ENCODE measurements at regions of chr6 and their contacts with region 1.

Region 1: GRCh38 chr6:34887753-34888513 is at the start of gene TAF11:
- DNase-seq: peak; percentile 93
- H3K4me3 ChIP-seq: peak within 1 kb of the TSS; percentile 80 to 96 (median 87)
- H3K27ac ChIP-seq: peak within 1 kb of the TSS; percentile 82
- H3K4me1 ChIP-seq: peaks cover 14% of the 10 kb centered on the region
- H3K27me3 ChIP-seq: no peaks in the 10 kb centered on the region
- CTCF ChIP-seq: no peak
- POLR2A ChIP-seq: peak; percentile 83
- total RNA-seq, gene TAF11: 37.1 and 41.0 TPM in 2 replicates

Region 2: GRCh38 chr6:34867484-34867883 is 20.4 kb before region 1 on chr6:
- CTCF ChIA-PET with region 1: interaction called, 7 read pairs
- POLR2A ChIA-PET with region 1: no interaction called
- dilution Hi-C with region 1: no loop called
- intact Hi-C with region 1: loop called (anchors 1 kb)
- DNase-seq: no peak
- H3K4me3 ChIP-seq: no peak overlapping the region
- H3K27ac ChIP-seq: no peak overlapping the region
- H3K4me1 ChIP-seq: peaks cover 22% of the 10 kb centered on the region
- H3K27me3 ChIP-seq: no peaks in the 10 kb centered on the region
- CTCF ChIP-seq: no peak
- POLR2A ChIP-seq: no peak

Region 3: DNA sequence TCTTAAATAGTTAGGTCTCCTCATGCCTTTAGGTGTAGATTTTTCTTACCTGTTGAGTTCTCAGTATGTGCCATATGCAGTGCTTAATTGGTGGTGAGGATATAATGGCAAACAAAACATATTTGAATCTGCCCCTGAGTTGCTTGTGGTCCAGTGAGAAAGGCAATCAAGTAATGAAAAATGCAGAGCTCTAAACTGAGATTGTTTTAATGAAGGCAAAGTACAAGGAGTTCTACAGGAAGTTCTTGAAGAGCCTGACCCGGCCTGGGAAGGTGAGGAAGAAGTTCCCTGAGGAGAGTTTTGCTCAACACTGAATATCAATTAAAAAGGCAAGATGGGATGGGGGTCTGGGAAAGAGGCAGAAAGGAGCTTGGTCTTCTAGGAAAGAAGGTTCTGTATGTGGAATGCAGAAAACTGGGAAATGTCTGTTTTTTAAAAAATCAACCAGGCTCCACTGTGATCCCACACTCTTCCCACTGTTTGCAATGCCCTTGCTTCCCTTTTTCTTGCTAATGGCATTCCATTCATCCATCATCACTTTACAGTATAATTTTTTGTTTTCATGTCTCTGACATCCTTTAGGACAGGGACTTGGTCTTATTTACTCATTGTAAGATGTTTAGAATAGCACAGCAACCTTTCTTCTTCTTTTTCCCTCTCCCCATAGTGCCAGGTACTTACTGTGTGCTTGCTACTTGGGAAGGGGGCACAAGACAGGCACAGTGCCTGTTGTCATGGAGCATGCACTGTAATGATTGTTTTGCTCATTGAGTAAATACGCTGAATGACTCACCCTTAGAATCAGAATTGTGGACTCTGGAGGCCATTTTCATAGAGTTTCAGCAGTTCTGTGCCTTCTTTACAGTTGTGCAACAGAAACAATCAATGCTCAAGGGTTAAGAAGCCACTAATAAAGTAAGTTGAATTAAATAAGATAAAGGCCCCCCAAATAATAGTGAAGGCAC is 65.4 kb after region 1 on chr6:
- CTCF ChIA-PET with region 1: no interaction called
- POLR2A ChIA-PET with region 1: no interaction called
- dilution Hi-C with region 1: no loop called
- intact Hi-C with region 1: loop called (anchors 10 kb)
- DNase-seq: peak; percentile 70
- H3K4me3 ChIP-seq: no peak overlapping the region
- H3K27ac ChIP-seq: no peak overlapping the region
- H3K4me1 ChIP-seq: peaks cover 3% of the 10 kb centered on the region
- H3K27me3 ChIP-seq: no peaks in the 10 kb centered on the region
- CTCF ChIP-seq: no peak
- POLR2A ChIP-seq: no peak

Region 4: DNA sequence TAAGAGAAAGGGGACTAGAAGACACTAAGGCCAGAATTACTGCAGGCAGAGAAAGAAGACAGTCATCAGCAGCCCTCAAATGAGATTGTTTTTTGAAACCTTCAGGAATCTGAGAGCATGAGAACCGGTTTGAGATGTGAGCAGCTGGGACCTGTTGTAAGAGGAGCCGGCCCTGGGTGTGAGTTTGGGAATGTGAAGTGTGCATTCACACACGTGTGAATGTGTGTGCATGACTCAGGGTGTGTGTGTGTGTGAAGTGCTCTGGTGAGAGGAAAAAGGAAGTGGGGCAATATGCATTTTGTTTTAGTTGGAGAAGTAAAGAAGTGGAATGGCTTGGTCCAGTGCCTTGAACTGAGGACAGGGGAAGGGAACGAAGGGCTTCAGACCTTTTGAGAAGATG is 330.1 kb after region 1 on chr6:
- CTCF ChIA-PET with region 1: no interaction called
- POLR2A ChIA-PET with region 1: no interaction called
- dilution Hi-C with region 1: no loop called
- intact Hi-C with region 1: no loop called
- DNase-seq: peak; percentile 19
- H3K4me3 ChIP-seq: no peak overlapping the region
- H3K27ac ChIP-seq: no peak overlapping the region
- H3K4me1 ChIP-seq: peaks cover 5% of the 10 kb centered on the region
- H3K27me3 ChIP-seq: peaks cover 22% of the 10 kb centered on the region in 2 experiments
- CTCF ChIP-seq: no peak
- POLR2A ChIP-seq: no peak

Measured in endothelial cell of umbilical vein (primary cell).